Right ventricle myocardium inferior (tissue), 1 donor: ENCODE measurements at regions of chr13 and their contacts with region 1.

Region 1: DNA sequence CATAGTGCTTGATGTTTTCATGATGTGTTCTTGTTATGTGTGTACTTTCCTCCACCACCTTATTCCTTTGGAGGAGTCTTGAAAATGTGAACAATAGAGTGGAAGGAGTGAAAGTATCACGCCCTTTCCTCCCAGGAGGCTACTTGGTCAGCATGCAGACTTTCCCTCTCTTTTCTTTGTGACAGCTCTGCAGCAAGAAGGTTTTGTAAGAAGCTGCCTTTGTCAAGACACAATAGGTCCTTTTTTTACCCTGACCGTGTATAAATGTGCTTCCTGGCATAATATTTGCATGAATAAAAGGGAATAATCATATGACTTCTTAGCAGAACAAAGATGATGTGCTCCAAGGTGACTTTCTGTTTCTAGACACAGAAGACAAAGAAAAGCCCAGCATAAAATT is 882.5 kb upstream of the SLITRK5 start:
- DNase-seq: no peak
- ATAC-seq: no peak

Region 2: GRCh38 chr13:86862137-86862536 is 73.5 kb after region 1 on chr13:
- intact Hi-C with region 1: no loop called
- DNase-seq: no peak
- ATAC-seq: no peak

Region 3: GRCh38 chr13:86906127-86906874 is 117.7 kb after region 1 on chr13:
- intact Hi-C with region 1: loop called (anchors 5 kb)
- DNase-seq: no peak
- ATAC-seq: no peak

Region 4: DNA sequence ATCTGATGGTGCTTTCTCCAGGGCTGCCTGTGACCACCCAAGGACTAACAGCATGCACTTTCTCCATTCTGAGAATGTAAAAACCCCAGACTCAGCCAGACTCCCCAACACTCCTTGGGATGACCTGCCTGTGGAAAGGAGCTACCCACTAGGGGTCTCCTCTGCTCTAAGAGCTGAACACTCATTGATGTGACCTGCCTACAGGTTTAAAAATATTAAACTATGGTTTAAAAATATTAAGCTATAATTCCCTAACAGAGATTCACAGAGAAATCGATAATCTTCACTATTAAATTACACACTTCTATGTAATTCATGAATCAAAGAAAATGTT is 186.3 kb after region 1 on chr13:
- intact Hi-C with region 1: no loop called
- DNase-seq: no peak
- ATAC-seq: no peak